ENCODE measurements at regions of chr10 and their contacts with region 1.

Region 1: GRCh38 chr10:72331601-72332422 is 22.9 kb downstream of the DNAJB12 start:
- DNase-seq: peak; percentile 94 to 97 (median 95)
- ATAC-seq: peak; percentile 55 to 79 (median 68)
- H3K4me3 ChIP-seq: no peak overlapping the region
- H3K27ac ChIP-seq: peak overlapping the region; percentile 90 to 97 (median 94)
- H3K4me1 ChIP-seq: peaks cover 0 to 90% (median 48%) of the 10 kb centered on the region in 4 donors
- H3K27me3 ChIP-seq: no peaks in the 10 kb centered on the region
- CTCF ChIP-seq: peak; percentile 21 to 62 (median 26)
- POLR2A ChIP-seq: peak; percentile 61

Region 2: DNA sequence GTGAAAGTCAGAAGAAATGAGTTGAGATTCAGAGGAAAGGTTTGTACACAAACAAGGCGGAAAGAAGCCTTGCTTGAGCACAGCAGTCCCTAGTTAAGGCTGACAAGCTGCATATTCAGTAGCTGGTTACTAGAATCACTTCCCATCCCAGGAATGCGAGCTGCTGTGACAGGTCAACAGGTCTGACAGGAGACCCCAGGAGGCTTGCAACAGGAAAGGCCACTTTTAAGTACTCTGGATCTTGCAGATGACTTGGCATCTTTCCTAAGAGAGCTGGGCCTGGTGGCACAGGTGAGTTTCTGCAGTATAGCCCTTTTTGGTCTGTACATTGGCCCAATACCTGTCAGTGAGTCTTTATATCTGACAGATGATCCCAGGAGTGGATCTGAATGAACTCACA is 1155.2 kb before region 1 on chr10:
- intact Hi-C with region 1: no loop called
- DNase-seq: no peak
- ATAC-seq: no peak
- H3K4me3 ChIP-seq: no peak overlapping the region
- H3K27ac ChIP-seq: no peak overlapping the region
- H3K4me1 ChIP-seq: no peaks in the 10 kb centered on the region
- H3K27me3 ChIP-seq: no peaks in the 10 kb centered on the region
- CTCF ChIP-seq: no peak
- POLR2A ChIP-seq: no peak

Region 3: GRCh38 chr10:72126184-72126871 is 205.5 kb before region 1 on chr10:
- intact Hi-C with region 1: loop called in 1 of 2 experiments (anchors 10 kb)
- DNase-seq: no peak
- ATAC-seq: peak; percentile 78 to 90 (median 88)
- H3K4me3 ChIP-seq: no peak overlapping the region
- H3K27ac ChIP-seq: no peak overlapping the region
- H3K4me1 ChIP-seq: no peaks in the 10 kb centered on the region
- H3K27me3 ChIP-seq: no peaks in the 10 kb centered on the region
- CTCF ChIP-seq: peak; percentile 51 to 71 (median 62)
- POLR2A ChIP-seq: no peak

Region 4: GRCh38 chr10:72273410-72274212 is 58.2 kb before region 1 on chr10 and contains the start of gene DDIT4:
- intact Hi-C with region 1: no loop called
- DNase-seq: peak; percentile 100
- ATAC-seq: peak; percentile 69 to 88 (median 78)
- H3K4me3 ChIP-seq: peak within 1 kb of the TSS; percentile 81 to 93 (median 89)
- H3K27ac ChIP-seq: peak within 1 kb of the TSS; percentile 97 to 99 (median 99)
- H3K4me1 ChIP-seq: peaks cover 0 to 19% (median 4%) of the 10 kb centered on the region in 4 donors
- H3K27me3 ChIP-seq: no peaks in the 10 kb centered on the region
- CTCF ChIP-seq: peak in 1 of 4 donors; percentile 3
- POLR2A ChIP-seq: peak; percentile 100
- total RNA-seq, gene DDIT4: 51.7 to 180 (median 143) TPM

Measured in right lobe of liver (tissue), 6 donors.